ENCODE measurements at regions of chr5 and their contacts with region 1.

Region 1: GRCh38 chr5:435961-436640 is 6.9 kb upstream of the EXOC3 start:
- DNase-seq: peak in 1 of 2 experiments; percentile 36
- H3K4me3 ChIP-seq: no peak overlapping the region
- H3K4me1 ChIP-seq: no peaks in the 10 kb centered on the region
- H3K27me3 ChIP-seq: no peaks in the 10 kb centered on the region

Region 2: GRCh38 chr5:310941-311434 is 125.1 kb before region 1 on chr5:
- in situ Hi-C with region 1: loop called (anchors 5 kb)
- DNase-seq: no peak
- H3K4me3 ChIP-seq: no peak overlapping the region
- H3K4me1 ChIP-seq: no peaks in the 10 kb centered on the region
- H3K27me3 ChIP-seq: no peaks in the 10 kb centered on the region

Region 3: DNA sequence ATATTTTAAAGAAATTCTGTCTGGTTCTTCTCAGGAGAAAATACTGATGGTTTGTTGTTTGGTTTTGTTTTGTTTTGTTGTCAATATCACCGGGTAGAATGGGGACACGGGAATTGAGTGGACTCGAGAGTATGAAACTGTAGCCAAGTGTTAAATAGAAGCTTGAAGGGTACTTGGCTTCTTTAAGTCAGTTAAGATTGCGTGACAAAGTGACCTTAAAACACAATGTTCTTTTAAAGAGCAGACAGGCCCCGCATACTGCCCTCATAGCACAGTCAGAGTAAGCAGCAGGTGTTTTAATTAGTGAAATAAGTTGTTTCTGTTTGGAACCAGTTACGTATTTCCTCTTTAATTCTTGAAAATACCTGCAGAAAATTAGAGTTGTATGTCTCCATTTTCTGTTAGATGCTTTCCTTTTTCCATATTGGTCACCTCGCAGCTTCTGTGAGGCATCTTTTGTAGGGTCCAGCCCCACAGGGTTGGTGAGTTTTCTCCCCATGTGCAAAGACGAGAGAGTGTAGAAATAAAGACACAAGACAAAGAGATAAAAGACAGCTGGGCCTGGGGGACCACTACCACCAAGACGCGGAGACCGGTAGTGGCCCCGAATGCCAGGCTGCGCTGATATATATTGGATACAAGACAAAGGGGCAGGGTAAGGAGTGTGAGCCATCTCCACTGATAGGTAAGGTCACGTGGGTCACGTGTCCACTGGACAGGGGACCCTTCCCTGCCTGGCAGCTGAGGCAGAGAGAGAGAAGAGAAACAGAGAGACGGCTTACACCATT is 466.2 kb after region 1 on chr5:
- in situ Hi-C with region 1: no loop called
- DNase-seq: no peak
- H3K4me3 ChIP-seq: no peak overlapping the region
- H3K4me1 ChIP-seq: no peaks in the 10 kb centered on the region
- H3K27me3 ChIP-seq: no peaks in the 10 kb centered on the region